Heart left ventricle (tissue), 16 donors: ENCODE measurements at regions of chr14 and their contacts with region 1.

Region 1: GRCh38 chr14:29911815-29912214 is 15.8 kb downstream of the PRKD1 start:
- DNase-seq: no peak
- ATAC-seq: no peak
- H3K4me3 ChIP-seq: no peak overlapping the region
- H3K27ac ChIP-seq: no peak overlapping the region
- H3K4me1 ChIP-seq: peaks cover 0 to 7% (median 0%) of the 10 kb centered on the region in 12 donors
- H3K27me3 ChIP-seq: no peaks in the 10 kb centered on the region
- CTCF ChIP-seq: no peak
- POLR2A ChIP-seq: no peak

Region 2: GRCh38 chr14:29710015-29710565 is 201.7 kb before region 1 on chr14:
- intact Hi-C with region 1: loop called in 1 of 10 experiments (anchors 10 kb)
- DNase-seq: no peak
- ATAC-seq: peak in 1 of 4 donors; percentile 45
- H3K4me3 ChIP-seq: no peak overlapping the region
- H3K27ac ChIP-seq: no peak overlapping the region
- H3K4me1 ChIP-seq: no peaks in the 10 kb centered on the region
- H3K27me3 ChIP-seq: no peaks in the 10 kb centered on the region
- CTCF ChIP-seq: peak; percentile 7 to 59 (median 37)
- POLR2A ChIP-seq: no peak